CD4-positive, alpha-beta memory T cell (primary cell): ENCODE measurements at regions of chr14 and their contacts with region 1.

Region 1: DNA sequence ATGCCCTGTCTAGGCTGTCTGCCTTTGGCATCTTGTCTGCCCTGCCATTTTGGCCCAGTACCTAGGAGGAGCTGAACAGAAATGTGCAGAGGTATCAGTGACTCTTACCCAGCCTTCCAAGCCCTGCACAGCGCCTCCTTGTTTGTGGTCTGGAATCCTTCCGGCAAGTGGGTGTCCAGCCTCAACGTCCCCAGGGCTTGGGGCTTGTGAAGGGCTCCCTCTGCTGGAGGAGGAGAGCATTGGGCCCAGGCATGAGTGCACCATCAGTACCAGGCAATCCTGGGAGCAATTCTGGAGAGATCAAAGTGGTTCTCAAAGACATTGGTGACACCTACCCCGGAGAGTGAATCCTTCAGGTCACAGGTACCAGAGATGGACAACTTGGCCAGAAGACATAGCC is 2.4 kb upstream of the TCL1B start:
- DNase-seq: peak in 3 of 5 donors; percentile 9 to 26 (median 13)
- H3K4me3 ChIP-seq: no peak overlapping the region
- H3K4me3 Mint-ChIP-seq: no peak overlapping the region
- H3K27ac ChIP-seq: no peak overlapping the region
- H3K27ac Mint-ChIP-seq: no peak overlapping the region
- H3K4me1 ChIP-seq: no peaks in the 10 kb centered on the region
- H3K4me1 Mint-ChIP-seq: no peaks in the 10 kb centered on the region
- H3K27me3 ChIP-seq: no peaks in the 10 kb centered on the region
- H3K27me3 Mint-ChIP-seq: peaks cover 6 to 23% of the 10 kb centered on the region in 2 donors

Region 2: DNA sequence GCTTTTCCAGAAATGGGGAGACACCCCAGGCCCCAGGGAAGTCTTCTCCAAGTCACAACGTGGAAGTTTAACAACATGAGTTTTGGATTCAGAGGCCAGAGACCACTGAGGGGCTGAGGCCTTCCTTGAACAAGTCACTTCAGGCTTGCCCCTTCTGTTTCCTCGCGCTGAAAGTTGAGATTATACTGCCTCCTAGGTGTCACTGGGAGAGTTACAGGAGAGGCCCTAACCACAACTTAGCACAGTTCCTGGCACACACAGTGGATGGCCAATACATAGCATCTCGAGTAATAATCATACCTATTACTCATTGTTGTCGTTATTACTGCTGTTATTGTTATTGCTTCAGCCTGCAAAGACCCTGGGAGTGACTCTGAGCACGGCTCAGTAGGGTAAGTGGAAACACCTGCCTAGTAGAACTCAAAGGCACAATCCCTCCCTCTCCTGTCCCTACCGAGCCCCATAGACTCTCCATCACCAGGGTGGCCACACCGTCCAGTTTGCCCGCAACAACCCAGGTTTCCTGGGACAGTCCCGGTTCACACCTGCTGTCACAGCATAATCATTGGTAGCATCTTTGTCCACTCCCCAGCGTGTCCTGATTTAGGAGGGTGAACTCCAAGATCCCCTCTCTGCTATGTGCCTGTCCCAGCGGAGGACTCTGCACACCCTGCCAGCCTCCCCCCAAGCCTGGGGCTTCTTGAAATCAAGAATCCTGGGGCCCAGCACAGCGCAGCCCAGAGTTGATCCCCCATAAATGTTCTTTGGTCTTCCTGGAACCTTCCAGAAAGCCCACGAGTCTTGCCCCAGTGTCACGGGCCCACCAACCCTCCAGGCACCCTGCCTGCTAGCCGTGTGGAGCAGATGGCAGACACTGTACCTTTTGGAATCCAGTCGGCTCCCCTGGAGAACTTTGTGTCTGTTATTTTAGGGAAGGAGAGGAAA is 252.3 kb before region 1 on chr14:
- CTCF ChIA-PET with region 1: interaction called, 3 read pairs
- POLR2A ChIA-PET with region 1: no interaction called
- intact Hi-C with region 1: loop called (anchors 1 kb)
- DNase-seq: no peak
- H3K4me3 ChIP-seq: no peak overlapping the region
- H3K4me3 Mint-ChIP-seq: no peak overlapping the region
- H3K27ac ChIP-seq: no peak overlapping the region
- H3K27ac Mint-ChIP-seq: peak overlapping the region in 1 of 7 donors; percentile 70
- H3K4me1 ChIP-seq: no peaks in the 10 kb centered on the region
- H3K4me1 Mint-ChIP-seq: peaks cover 0 to 2% (median under 1%) of the 10 kb centered on the region in 4 donors
- H3K27me3 ChIP-seq: no peaks in the 10 kb centered on the region
- H3K27me3 Mint-ChIP-seq: no peaks in the 10 kb centered on the region